K562 (cell line): ENCODE measurements at regions of chr13 and their contacts with region 1.

Region 1: GRCh38 chr13:57624565-57625435 is 6.7 kb upstream of the PCDH17 start:
- DNase-seq: peak; percentile 7 to 34 (median 15)
- ATAC-seq: no peak
- H3K4me3 ChIP-seq: no peak overlapping the region
- H3K27ac ChIP-seq: no peak overlapping the region
- H3K4me1 ChIP-seq: no peaks in the 10 kb centered on the region
- H3K27me3 ChIP-seq: no peaks in the 10 kb centered on the region
- CTCF ChIP-seq: peak in 2 of 3 experiments; percentile 44 to 53; a peak in 4 of 6 replicates
- EP300 ChIP-seq: no peak
- POLR2A ChIP-seq: no peak
- RAD21 ChIP-seq: peak; percentile 24 to 38; a peak in 2 of 4 replicates

Region 2: GRCh38 chr13:57724486-57725272 is 99.9 kb after region 1 on chr13:
- CTCF ChIA-PET with region 1: no interaction called
- POLR2A ChIA-PET with region 1: no interaction called
- in situ Hi-C with region 1: no loop called
- intact Hi-C with region 1: no loop called
- DNase-seq: no peak
- ATAC-seq: no peak
- H3K4me3 ChIP-seq: no peak overlapping the region
- H3K27ac ChIP-seq: no peak overlapping the region
- H3K4me1 ChIP-seq: no peaks in the 10 kb centered on the region
- H3K27me3 ChIP-seq: no peaks in the 10 kb centered on the region
- CTCF ChIP-seq: no peak
- EP300 ChIP-seq: no peak
- POLR2A ChIP-seq: no peak
- RAD21 ChIP-seq: no peak

Region 3: DNA sequence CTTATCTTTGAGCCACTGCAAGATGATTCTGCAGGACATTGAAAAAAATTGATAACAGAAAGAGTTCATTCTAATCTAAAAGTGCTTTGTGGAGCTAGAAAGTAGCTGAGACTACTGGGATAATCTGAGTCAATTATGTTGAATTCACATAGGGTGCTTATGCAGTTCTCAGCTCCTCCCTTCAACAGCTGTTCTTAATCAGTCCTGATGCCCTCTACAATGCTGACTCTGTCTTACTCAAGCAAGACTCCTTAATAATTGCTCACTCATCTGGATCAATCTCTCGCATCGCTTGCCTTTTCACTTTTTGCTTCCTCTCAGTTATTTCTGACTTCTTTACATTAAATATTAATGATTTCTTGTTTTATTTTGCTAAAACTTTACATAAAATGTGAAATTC is 188.9 kb after region 1 on chr13:
- CTCF ChIA-PET with region 1: no interaction called
- POLR2A ChIA-PET with region 1: no interaction called
- in situ Hi-C with region 1: no loop called
- intact Hi-C with region 1: no loop called
- DNase-seq: no peak
- ATAC-seq: no peak
- H3K4me3 ChIP-seq: no peak overlapping the region
- H3K27ac ChIP-seq: no peak overlapping the region
- H3K4me1 ChIP-seq: no peaks in the 10 kb centered on the region
- H3K27me3 ChIP-seq: no peaks in the 10 kb centered on the region
- CTCF ChIP-seq: no peak
- EP300 ChIP-seq: no peak
- POLR2A ChIP-seq: no peak
- RAD21 ChIP-seq: no peak

Region 4: GRCh38 chr13:59261928-59262488 is 1637.2 kb after region 1 on chr13:
- CTCF ChIA-PET with region 1: no interaction called
- POLR2A ChIA-PET with region 1: no interaction called
- in situ Hi-C with region 1: no loop called
- intact Hi-C with region 1: loop called (anchors 10 kb)
- DNase-seq: peak in 2 of 4 experiments; percentile 9 to 12
- ATAC-seq: no peak
- H3K4me3 ChIP-seq: no peak overlapping the region
- H3K27ac ChIP-seq: no peak overlapping the region
- H3K4me1 ChIP-seq: no peaks in the 10 kb centered on the region
- H3K27me3 ChIP-seq: no peaks in the 10 kb centered on the region
- CTCF ChIP-seq: 0 out of 6 replicates have a peak, but pooled peaks of 2 of the 3 experiments have one; percentile 19 to 26
- EP300 ChIP-seq: no peak
- POLR2A ChIP-seq: no peak
- RAD21 ChIP-seq: 0 out of 4 replicates have a peak, but pooled peaks of 1 of the 2 experiments have one; percentile 13